Right ventricle myocardium inferior (tissue), 1 donor: ENCODE measurements at regions of chr20 and their contacts with region 1.

Region 1: DNA sequence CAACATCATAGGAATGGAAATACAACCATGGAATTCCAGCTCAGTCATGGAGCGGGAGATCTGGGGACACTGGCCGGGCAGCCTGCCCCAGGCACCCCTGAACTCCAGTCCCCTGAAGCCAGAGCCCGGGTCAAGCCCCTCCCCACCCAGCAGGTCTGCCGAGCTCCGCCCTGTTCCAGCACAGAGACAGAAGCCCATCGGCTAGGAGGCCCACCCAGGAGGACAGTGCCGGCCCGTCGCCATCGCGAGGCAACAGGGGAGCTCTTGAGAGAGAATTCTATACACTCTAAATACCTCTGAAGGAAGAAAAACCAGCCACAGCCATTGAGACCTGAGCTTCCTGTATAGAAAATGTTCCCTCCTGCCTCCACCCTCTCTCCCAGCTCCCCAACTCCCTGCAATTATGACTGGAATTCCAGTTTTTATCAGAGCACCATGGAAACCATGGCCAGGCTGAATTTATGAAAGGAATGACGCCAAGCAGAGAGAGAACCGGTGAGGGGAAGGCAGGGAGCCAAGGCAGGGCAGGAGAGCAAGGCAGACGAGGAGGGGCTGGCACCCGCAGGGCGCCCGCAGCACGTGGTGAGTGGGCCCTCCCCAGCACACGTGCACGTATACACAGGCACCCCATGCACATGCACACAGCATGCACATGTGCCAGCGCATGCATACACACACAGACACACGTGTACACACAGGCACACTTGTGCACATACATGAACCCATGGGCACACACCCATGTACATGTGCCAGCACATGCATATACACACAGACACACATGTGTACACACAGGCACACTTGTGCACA is 27.6 kb upstream of the MRGBP start:
- DNase-seq: peak; percentile 53
- ATAC-seq: no peak

Region 2: DNA sequence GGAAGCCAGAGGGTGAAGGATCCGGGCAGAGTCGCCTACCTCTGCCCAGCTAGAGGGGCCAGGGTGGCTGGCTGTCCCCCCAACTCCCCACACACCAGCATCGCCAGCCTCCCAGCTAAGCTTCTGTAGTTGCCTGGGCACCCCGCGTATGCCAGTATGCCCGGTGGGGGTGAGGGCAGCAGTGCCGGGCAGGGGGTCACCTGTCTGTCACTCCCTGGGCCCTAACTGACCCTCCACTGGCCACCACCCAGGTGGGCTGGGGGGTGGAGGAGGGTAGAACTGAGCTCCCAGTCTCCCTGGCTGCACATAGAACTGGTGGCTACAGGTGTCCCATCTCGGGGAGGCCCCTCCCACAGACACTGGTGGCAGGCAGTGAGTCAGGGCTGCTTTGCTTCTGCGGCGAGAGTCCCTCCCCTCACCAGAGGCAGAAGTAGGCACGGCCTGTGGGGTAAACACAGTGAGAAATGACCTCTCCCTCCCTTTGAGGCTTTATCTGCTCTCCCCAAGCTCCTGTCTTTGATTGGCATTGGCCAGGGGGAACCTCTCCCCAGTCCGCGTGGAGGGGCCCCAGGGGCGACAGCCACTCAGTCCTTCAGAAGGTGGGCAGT is 57.7 kb before region 1 on chr20:
- intact Hi-C with region 1: loop called (anchors 5 kb)
- DNase-seq: peak; percentile 60
- ATAC-seq: no peak